MCF 10A (cell line): ENCODE measurements at regions of chr5 and their contacts with region 1.

Region 1: GRCh38 chr5:94693043-94693822 is 74.8 kb downstream of the SLF1 start:
- DNase-seq: peak; percentile 75
- H3K4me3 Mint-ChIP-seq: peak overlapping the region; percentile 24
- H3K27ac Mint-ChIP-seq: peak overlapping the region; percentile 79
- H3K4me1 Mint-ChIP-seq: peaks cover 16% of the 10 kb centered on the region
- H3K27me3 Mint-ChIP-seq: no peaks in the 10 kb centered on the region
- CTCF ChIP-seq: peak; percentile 38

Region 2: DNA sequence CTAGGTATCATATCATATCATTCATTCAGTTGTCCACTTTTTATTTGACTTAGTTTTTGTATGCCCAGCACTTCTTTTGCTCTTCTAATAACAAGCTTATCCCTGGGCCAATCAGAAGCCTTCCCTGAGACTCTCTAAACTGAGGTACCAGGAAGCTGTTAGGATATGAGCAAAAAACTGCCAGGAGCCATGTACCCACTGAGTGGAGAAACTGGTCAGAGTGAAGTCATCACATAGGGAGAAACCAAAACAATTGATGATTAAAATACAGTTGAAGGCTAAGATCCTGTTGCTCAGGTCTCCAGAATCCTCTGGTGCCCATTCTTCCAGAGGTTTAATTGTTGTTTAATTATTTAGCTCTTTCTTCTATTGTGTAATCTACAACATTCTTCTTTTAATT is 195.0 kb before region 1 on chr5:
- CTCF ChIA-PET with region 1: no interaction called
- POLR2A ChIA-PET with region 1: no interaction called
- intact Hi-C with region 1: no loop called
- DNase-seq: no peak
- H3K4me3 Mint-ChIP-seq: no peak overlapping the region
- H3K27ac Mint-ChIP-seq: no peak overlapping the region
- H3K4me1 Mint-ChIP-seq: no peaks in the 10 kb centered on the region
- H3K27me3 Mint-ChIP-seq: no peaks in the 10 kb centered on the region
- CTCF ChIP-seq: no peak

Region 3: GRCh38 chr5:94524841-94525697 is 168.2 kb before region 1 on chr5:
- CTCF ChIA-PET with region 1: interaction called, 4 read pairs
- POLR2A ChIA-PET with region 1: no interaction called
- intact Hi-C with region 1: loop called (anchors 1 kb)
- DNase-seq: peak; percentile 45
- H3K4me3 Mint-ChIP-seq: no peak overlapping the region
- H3K27ac Mint-ChIP-seq: no peak overlapping the region
- H3K4me1 Mint-ChIP-seq: no peaks in the 10 kb centered on the region
- H3K27me3 Mint-ChIP-seq: no peaks in the 10 kb centered on the region
- CTCF ChIP-seq: peak; percentile 68

Region 4: GRCh38 chr5:94618493-94619328 is 74.5 kb before region 1 on chr5 and contains the starts of genes KIAA0825 and SLF1:
- CTCF ChIA-PET with region 1: interaction called, 4 read pairs
- POLR2A ChIA-PET with region 1: interaction called, 8 read pairs
- intact Hi-C with region 1: loop called (anchors 2 kb)
- DNase-seq: peak; percentile 93
- H3K4me3 Mint-ChIP-seq: peak within 1 kb of the TSS; percentile 87
- H3K27ac Mint-ChIP-seq: peak within 1 kb of the TSS; percentile 74
- H3K4me1 Mint-ChIP-seq: peaks cover 20% of the 10 kb centered on the region
- H3K27me3 Mint-ChIP-seq: no peaks in the 10 kb centered on the region
- CTCF ChIP-seq: no peak
- total RNA-seq, gene KIAA0825: 2.1 and 2.5 TPM in 2 replicates
- total RNA-seq, gene SLF1: 6.0 and 7.5 TPM in 2 replicates